ENCODE measurements at regions of chr5 and their contacts with region 1.

Region 1: DNA sequence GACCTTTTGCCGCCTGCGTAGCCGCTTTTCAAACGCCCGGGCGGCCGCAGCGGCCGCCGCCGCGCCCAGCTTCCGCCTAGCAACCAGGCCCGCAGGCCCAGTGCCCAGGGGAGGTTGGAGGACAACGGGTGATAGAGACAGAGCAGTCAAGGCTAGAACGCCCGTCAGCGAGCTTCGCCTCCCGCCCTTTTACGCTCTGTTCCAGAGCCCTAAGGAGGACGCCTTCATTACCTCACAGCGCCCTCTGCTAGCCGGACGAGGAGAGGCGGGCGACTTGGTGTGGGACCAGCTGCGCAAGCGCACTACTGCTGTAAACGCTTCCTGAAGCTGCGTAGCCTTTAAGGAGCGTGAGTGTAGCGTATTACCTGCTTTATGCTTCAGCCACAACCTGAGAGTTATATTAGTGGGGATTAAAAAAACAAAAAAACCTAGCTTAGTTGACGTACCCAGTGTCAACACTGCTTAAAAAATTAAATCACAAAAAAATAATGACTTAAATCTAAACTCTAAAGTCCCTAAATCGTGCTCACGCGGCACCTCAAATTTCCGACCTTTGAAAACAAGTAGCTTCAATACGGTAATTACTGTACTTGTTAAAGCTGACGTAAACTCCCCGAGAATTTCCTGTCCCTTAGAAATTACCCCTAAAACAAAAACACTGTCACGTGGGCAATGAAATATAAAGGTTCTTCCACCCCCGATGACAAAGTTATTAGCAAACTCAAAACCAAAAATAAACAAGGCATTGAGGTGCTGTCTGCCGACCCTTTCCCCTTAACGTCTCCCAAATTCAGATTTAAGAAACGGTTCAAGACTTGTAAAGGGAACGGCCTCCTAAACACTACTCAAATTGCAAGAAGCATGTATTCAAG is at the start of gene CEP120:
- DNase-seq: peak; percentile 98
- H3K4me3 ChIP-seq: peak within 1 kb of the TSS; percentile 98
- H3K27ac ChIP-seq: peak within 1 kb of the TSS; percentile 96
- H3K4me1 ChIP-seq: peaks cover 37% of the 10 kb centered on the region
- H3K27me3 ChIP-seq: no peaks in the 10 kb centered on the region
- CTCF ChIP-seq: peak; percentile 82
- total RNA-seq, gene CEP120: 11.8 TPM

Region 2: DNA sequence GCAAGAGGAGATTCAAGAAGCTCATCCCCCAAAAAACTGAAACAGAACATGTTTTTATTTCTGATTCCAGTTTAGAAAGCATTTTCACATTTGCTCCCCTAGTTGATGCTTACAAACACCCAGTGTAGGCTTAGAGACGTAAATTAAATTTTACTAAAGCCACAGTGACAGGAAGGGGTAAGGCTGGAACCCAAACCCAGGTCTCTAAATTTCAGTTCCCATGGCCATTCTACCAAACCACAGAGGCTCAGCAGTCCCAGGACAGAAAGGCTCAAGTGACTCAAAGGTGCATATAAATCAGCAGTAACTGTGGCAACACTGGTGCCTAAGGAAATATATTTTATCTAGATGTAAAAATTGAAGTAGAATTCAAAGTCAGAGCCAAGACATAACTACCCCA is 129.0 kb before region 1 on chr5:
- intact Hi-C with region 1: no loop called
- DNase-seq: no peak
- H3K4me3 ChIP-seq: no peak overlapping the region
- H3K27ac ChIP-seq: no peak overlapping the region
- H3K4me1 ChIP-seq: no peaks in the 10 kb centered on the region
- H3K27me3 ChIP-seq: no peaks in the 10 kb centered on the region
- CTCF ChIP-seq: no peak

Region 3: DNA sequence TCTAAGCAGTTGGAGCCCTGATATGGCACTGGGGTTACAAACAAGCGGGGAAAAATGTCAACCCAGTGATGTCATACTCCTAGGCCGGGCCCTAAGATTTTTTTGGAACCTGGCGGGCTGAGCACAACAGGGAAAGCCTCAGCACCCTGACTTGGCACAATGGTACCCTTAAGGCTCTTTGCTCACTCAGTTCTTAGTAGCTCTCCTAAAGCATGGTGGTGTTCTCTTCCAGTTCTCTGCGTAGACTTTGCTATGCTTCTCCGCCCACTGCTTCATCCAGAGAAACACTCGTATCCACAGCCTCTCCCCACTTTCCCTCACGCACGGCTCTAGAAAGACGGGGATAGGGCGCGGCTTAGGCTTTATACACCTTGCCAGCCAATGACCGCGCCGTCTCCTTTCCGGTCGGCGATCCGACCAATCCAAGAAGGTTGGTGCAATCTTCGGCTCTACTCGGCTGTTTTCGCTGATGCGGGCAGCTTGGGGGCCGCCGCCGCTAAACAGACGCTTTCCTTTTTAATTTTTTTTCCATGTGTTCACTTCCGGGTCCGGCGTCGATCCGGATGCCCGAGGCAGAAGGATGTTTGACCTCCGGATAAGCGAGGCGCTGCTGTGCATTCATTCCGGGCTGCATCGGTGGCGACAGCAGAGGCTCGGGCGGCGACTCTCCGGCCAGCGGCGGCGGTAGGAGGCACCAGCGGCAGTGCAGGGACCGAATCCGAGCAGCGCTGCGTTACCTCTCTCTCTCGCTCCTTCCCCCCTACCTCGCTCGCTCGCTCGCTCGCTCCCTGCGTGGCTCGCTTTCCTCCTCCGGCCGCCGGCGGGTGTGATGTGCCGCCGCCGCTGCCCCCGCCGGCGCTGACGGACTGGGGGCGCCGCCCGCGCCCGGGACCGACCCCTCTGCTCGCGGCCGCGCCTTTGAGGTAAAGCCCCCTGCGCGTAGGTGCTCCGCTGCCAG is 88.4 kb after region 1 on chr5 and contains the start of gene CSNK1G3:
- intact Hi-C with region 1: loop called (anchors 5 kb)
- DNase-seq: peak; percentile 96
- H3K4me3 ChIP-seq: peak within 1 kb of the TSS; percentile 85
- H3K27ac ChIP-seq: peak within 1 kb of the TSS; percentile 93
- H3K4me1 ChIP-seq: peaks cover 36% of the 10 kb centered on the region
- H3K27me3 ChIP-seq: no peaks in the 10 kb centered on the region
- CTCF ChIP-seq: no peak
- total RNA-seq, gene CSNK1G3: 27.6 TPM

Region 4: GRCh38 chr5:123610665-123611405 is 187.3 kb after region 1 on chr5:
- intact Hi-C with region 1: loop called (anchors 5 kb)
- DNase-seq: no peak
- H3K4me3 ChIP-seq: no peak overlapping the region
- H3K27ac ChIP-seq: no peak overlapping the region
- H3K4me1 ChIP-seq: peaks cover 3% of the 10 kb centered on the region
- H3K27me3 ChIP-seq: no peaks in the 10 kb centered on the region
- CTCF ChIP-seq: peak; percentile 99